PC-9 (cell line): ENCODE measurements at regions of chr2 and their contacts with region 1.

Region 1: DNA sequence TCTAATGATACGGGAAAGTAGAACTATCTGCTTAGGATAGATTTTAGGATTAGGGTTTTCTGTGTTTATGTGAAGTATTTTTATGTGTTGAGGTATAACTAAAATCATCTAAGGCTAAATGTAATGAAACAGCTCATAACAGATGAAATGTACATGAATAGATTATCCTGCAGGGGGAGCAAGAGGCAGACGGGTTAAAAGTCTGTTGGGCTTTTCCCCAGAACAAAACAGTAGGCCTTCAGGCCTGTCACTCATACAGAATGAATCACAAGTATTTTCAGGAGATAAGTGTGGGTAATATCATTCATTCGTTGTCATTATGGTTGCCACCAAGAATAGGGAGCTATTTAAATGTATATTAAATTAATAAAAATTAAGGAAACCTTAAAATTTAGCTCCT is 107.9 kb upstream of the IL1R2 start:
- DNase-seq: peak; percentile 7 to 41
- H3K4me3 ChIP-seq: no peak overlapping the region
- H3K27ac ChIP-seq: no peak overlapping the region
- H3K4me1 ChIP-seq: peaks cover 9% of the 10 kb centered on the region; the same call in 1 of the 2 replicates
- H3K27me3 ChIP-seq: no peaks in the 10 kb centered on the region
- CTCF ChIP-seq: peak; percentile 74

Region 2: GRCh38 chr2:101998896-101999789 is 115.3 kb after region 1 on chr2:
- CTCF ChIA-PET with region 1: interaction called, 3 read pairs
- POLR2A ChIA-PET with region 1: interaction called, 3 read pairs
- intact Hi-C with region 1: loop called (anchors 5 kb)
- DNase-seq: peak in 1 of 2 experiments; percentile 82
- H3K4me3 ChIP-seq: no peak overlapping the region
- H3K27ac ChIP-seq: peak overlapping the region; percentile 86
- H3K4me1 ChIP-seq: peaks cover 42% of the 10 kb centered on the region
- H3K27me3 ChIP-seq: no peaks in the 10 kb centered on the region
- CTCF ChIP-seq: no peak

Region 3: GRCh38 chr2:102166189-102166845 is 282.5 kb after region 1 on chr2:
- CTCF ChIA-PET with region 1: no interaction called
- POLR2A ChIA-PET with region 1: no interaction called
- intact Hi-C with region 1: loop called (anchors 5 kb)
- DNase-seq: no peak
- H3K4me3 ChIP-seq: no peak overlapping the region
- H3K27ac ChIP-seq: no peak overlapping the region
- H3K4me1 ChIP-seq: peaks cover 17% of the 10 kb centered on the region
- H3K27me3 ChIP-seq: no peaks in the 10 kb centered on the region
- CTCF ChIP-seq: peak; percentile 60